PC-3 (cell line): ENCODE measurements at regions of chr20 and their contacts with region 1.

Region 1: GRCh38 chr20:9294053-9294452 is 220.3 kb upstream of the LAMP5 start:
- DNase-seq: peak; percentile 87
- ATAC-seq: peak; percentile 98
- H3K4me3 ChIP-seq: no peak overlapping the region
- H3K27ac ChIP-seq: no peak overlapping the region
- H3K4me1 ChIP-seq: peaks cover 22% of the 10 kb centered on the region
- H3K27me3 ChIP-seq: no peaks in the 10 kb centered on the region
- CTCF ChIP-seq: no peak

Region 2: DNA sequence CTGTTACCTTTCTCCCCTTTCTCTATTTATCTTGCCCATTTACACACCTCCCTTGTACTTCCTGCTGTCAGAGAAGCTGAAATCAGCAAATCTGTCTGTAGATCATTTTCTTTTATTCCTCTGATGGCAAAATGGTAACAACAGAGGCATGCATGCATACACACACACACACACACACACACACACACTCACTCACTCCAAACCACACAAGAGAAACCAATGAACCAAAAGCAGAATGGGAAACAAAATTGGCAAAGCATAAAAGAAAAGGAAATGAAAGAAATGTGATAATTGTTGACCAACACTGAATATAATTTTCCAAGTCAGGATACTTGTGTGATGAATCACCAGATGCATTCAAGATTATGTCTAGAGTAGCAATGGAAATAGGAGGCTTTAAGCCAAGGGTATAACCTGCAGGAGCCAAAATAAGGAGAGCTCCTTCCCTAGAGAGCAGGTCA is 52.8 kb before region 1 on chr20:
- CTCF ChIA-PET with region 1: no interaction called
- POLR2A ChIA-PET with region 1: no interaction called
- intact Hi-C with region 1: loop called (anchors 5 kb)
- DNase-seq: peak; percentile 88
- ATAC-seq: peak; percentile 88
- H3K4me3 ChIP-seq: no peak overlapping the region
- H3K27ac ChIP-seq: peak overlapping the region; percentile 2; the same call in 1 of the 2 replicates
- H3K4me1 ChIP-seq: peaks cover 24% of the 10 kb centered on the region
- H3K27me3 ChIP-seq: no peaks in the 10 kb centered on the region
- CTCF ChIP-seq: no peak